Common myeloid progenitor, CD34-positive (primary cell): ENCODE measurements at regions of chr4 and their contacts with region 1.

Region 1: DNA sequence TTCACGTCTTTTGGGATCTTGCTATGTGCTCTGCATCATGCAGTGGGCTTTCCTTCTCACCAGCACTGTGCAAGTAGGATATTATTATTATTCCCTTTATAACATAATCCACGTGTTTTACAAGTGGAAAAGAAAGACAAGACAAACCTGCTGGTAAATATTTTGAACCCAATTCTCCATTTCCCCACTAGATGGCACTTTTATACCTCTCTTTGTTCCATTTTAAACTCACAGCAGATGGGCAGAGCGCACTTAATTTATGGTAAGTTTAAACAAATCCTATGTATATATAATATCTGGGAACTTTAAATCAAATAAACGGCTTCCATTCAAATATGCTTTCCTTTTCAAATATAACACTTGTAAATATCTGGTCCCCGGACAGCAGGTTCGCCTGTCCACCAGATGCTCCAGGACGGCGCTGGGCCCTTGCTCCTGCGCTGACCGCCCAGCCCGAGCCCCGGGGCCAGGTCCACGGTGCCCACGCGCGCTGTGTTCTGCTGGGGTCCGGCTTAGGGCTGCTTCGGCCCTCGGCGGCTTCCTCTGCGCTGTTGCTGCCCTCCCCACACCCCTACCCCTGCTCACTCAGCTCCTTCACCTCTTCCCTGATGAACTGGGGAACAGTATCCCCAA is 31.1 kb downstream of the F11 start:
- DNase-seq: peak; percentile 32 to 67 (median 51)
- H3K4me3 ChIP-seq: no peak overlapping the region
- H3K27ac ChIP-seq: no peak overlapping the region
- H3K4me1 ChIP-seq: peaks cover 0 to 5% (median 2%) of the 10 kb centered on the region in 4 experiments
- H3K27me3 ChIP-seq: peaks cover 4 to 38% (median 20%) of the 10 kb centered on the region in 5 experiments

Region 2: GRCh38 chr4:186587416-186588018 is 290.4 kb after region 1 on chr4:
- CTCF ChIA-PET with region 1: interaction called, 20 read pairs
- POLR2A ChIA-PET with region 1: no interaction called
- DNase-seq: peak; percentile 35 to 63 (median 58)
- H3K4me3 ChIP-seq: no peak overlapping the region
- H3K27ac ChIP-seq: no peak overlapping the region
- H3K4me1 ChIP-seq: no peaks in the 10 kb centered on the region
- H3K27me3 ChIP-seq: peaks cover 0 to 4% (median 0%) of the 10 kb centered on the region in 5 experiments